ENCODE measurements at regions of chr1 and their contacts with region 1.

Region 1: DNA sequence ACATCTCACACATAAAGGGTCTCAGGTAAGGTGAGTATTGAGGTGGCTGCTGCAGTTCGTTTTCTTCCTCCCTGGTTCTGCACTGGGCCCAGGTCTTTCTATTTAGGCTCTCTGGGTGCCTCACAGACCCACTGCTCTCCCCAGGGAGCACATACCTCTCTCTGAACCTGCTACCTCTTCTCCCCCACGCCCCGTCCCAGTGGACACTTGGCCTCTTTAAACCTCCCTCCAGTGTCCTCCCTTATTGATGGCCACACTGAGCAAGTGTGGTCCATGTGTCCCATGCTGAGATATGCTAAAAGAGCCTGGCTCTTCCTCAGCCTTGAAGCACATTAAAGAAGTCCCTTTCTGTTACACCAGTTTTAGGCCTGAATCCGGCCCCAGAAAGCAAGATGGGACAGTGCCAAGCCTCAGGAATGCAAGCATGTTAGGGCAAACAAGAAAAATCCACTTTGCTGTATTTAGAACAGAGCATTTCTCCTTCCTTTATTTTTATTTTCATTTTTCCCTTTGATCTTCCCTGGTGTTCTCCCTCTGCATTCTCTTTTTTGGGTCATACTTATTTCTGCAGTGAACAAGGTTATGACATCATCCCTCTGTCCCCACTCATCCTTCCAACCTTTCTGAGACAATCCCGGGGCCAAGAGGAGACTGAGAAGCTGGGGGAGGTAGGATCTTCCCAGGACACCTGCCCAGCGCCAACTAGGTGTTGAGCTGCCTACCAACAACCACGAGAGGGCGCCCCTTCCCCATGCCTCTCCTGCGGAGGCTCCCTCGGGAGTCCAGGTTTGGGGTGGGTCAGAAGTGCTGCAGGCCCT is 5.0 kb upstream of the CHI3L2 start:
- DNase-seq: peak; percentile 79 to 80
- H3K4me3 ChIP-seq: no peak overlapping the region
- H3K4me3 Mint-ChIP-seq: no peak overlapping the region
- H3K27ac Mint-ChIP-seq: peak overlapping the region; percentile 21
- H3K4me1 ChIP-seq: peaks cover 13% of the 10 kb centered on the region
- H3K4me1 Mint-ChIP-seq: peaks cover 18% of the 10 kb centered on the region
- H3K27me3 ChIP-seq: no peaks in the 10 kb centered on the region
- H3K27me3 Mint-ChIP-seq: no peaks in the 10 kb centered on the region
- CTCF ChIP-seq: peak; percentile 69 to 74

Region 2: DNA sequence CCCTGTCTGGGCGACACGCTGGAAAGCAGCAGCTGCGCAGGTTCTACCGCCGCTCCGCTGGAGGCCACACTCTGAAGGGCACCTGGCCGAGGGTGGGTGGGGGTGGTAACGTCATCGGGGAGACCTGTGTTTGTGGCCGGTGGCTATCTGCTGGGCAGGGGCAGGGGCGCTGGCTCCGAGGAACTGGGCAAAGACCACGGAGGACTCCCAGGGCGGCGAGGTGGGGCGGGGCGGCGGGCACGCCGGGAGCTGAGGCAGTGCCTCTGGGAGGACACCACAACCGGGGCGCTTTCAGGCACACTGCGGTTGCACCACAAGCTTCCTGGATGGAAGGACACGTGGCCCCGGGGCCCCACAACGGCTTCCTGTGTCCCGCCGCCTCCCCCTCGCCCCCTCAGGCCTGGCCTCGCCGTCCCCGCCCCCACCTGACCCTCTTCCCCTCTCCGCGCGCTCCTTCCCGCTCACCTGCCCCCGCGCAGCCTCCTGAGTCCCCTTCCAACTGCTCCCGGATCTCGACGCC is 18.8 kb before region 1 on chr1:
- CTCF ChIA-PET with region 1: no interaction called
- POLR2A ChIA-PET with region 1: no interaction called
- intact Hi-C with region 1: no loop called
- DNase-seq: peak; percentile 80 to 89
- H3K4me3 ChIP-seq: peak overlapping the region; percentile 54
- H3K4me3 Mint-ChIP-seq: peak overlapping the region; percentile 77
- H3K27ac Mint-ChIP-seq: peak overlapping the region; percentile 49
- H3K4me1 ChIP-seq: peaks cover 34% of the 10 kb centered on the region
- H3K4me1 Mint-ChIP-seq: peaks cover 14% of the 10 kb centered on the region
- H3K27me3 ChIP-seq: no peaks in the 10 kb centered on the region
- H3K27me3 Mint-ChIP-seq: no peaks in the 10 kb centered on the region
- CTCF ChIP-seq: no peak

Region 3: GRCh38 chr1:111399792-111400610 is 177.5 kb after region 1 on chr1:
- CTCF ChIA-PET with region 1: interaction called, 13 read pairs
- POLR2A ChIA-PET with region 1: no interaction called
- intact Hi-C with region 1: loop called (anchors 1 kb)
- DNase-seq: peak in 1 of 2 experiments; percentile 60
- H3K4me3 ChIP-seq: no peak overlapping the region
- H3K4me3 Mint-ChIP-seq: no peak overlapping the region
- H3K27ac Mint-ChIP-seq: no peak overlapping the region
- H3K4me1 ChIP-seq: peaks cover 3% of the 10 kb centered on the region; the same call in 1 of the 2 replicates
- H3K4me1 Mint-ChIP-seq: peaks cover 7% of the 10 kb centered on the region
- H3K27me3 ChIP-seq: no peaks in the 10 kb centered on the region
- H3K27me3 Mint-ChIP-seq: no peaks in the 10 kb centered on the region
- CTCF ChIP-seq: peak; percentile 28 to 31

Measured in Caco-2 (cell line).